ENCODE measurements at regions of chr3 and their contacts with region 1.

Region 1: DNA sequence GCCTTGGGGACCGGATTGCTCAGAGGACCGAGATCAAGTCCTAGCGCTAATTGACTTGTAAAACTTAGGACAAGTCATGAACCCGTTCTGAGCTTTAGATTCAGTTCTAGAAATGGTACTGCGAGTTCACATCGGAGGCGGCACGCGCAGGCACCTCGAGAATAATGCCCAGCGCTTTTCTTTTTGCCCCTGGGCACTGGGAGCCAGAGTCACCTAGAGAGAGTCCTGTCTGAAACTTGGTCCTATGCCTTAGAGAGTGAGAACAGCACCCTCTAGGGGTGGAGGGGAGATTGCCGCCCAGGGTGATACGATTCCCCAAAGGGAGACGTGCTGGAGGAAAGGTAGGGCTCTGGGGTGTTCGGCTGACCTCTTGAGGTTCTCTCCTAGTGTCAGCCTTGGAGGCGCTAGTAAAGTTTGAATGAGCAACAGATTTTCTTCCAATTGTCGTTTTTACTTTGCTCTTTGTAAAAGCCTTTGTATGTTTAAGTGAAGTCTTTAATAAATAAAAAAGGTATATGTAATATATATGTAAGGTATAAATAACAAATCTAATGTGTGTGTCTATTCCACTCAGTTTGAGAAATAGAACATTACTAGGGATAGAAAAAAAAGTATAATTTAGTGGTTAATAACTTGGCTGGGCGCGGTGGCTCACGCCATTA is 826 bp downstream of the EEF1AKMT4 start:
- DNase-seq: peak; percentile 77 to 92 (median 86)
- ATAC-seq: peak; percentile 62
- H3K4me3 ChIP-seq: peak overlapping the region; percentile 86
- H3K4me3 Mint-ChIP-seq: peak overlapping the region; percentile 93
- H3K27ac ChIP-seq: peak overlapping the region; percentile 61 to 79
- H3K27ac Mint-ChIP-seq: peak overlapping the region; percentile 94
- H3K4me1 ChIP-seq: peaks cover 28% of the 10 kb centered on the region
- H3K4me1 Mint-ChIP-seq: peaks cover 21% of the 10 kb centered on the region
- H3K27me3 ChIP-seq: no peaks in the 10 kb centered on the region
- H3K27me3 Mint-ChIP-seq: no peaks in the 10 kb centered on the region
- CTCF ChIP-seq: peak; percentile 88

Region 2: DNA sequence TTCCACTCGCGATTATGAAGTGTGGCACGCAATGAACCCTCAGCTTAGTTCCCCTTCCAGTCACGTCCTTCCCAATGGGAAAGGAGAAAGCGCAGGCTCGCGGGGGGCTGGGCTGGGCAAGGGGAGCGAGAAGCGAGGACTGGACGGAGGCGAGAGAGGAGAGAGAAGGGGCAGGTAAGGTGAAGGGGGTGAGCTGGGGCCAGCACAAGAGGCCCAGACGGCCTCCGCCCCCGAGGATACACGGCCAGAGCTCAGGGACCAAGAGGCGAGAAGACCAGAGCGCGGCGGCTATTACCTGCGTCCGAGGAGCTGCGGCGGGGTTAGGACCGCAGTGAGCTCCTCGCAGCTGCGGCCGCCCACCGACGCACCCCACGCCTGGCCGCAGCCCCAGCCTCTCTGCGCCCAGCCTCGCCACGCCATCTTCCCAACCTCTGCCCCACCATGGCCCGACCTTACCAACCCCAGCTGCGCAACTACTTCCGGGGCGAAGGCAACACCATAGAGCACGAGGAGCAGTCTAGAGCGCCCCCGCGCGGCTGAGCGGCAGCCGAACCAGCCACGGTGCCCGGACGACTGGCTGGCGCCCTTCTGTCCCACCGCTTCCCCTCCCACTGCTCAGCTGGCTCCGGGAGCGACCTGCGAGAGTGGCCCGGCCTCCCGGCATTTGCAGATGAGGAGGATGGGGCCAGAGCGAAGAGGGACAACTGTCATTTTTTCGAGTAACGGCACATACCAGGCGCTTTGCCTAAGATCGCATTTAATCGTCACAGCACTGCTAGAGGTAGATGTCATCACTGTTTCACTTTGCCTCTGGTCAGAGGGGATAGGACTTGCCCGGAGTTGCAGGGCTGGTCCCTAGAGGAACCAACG is 365.6 kb before region 1 on chr3 and contains the start of gene PARL:
- CTCF ChIA-PET with region 1: interaction called, 4 read pairs
- POLR2A ChIA-PET with region 1: no interaction called
- intact Hi-C with region 1: loop called in 1 of 2 experiments (anchors 2 kb)
- DNase-seq: peak; percentile 93 to 98 (median 96)
- ATAC-seq: peak; percentile 100
- H3K4me3 ChIP-seq: peak within 1 kb of the TSS; percentile 97
- H3K4me3 Mint-ChIP-seq: peak within 1 kb of the TSS; percentile 97
- H3K27ac ChIP-seq: peak within 1 kb of the TSS; percentile 66
- H3K27ac Mint-ChIP-seq: peak within 1 kb of the TSS; percentile 82
- H3K4me1 ChIP-seq: peaks cover 37% of the 10 kb centered on the region
- H3K4me1 Mint-ChIP-seq: peaks cover 36% of the 10 kb centered on the region
- H3K27me3 ChIP-seq: no peaks in the 10 kb centered on the region
- H3K27me3 Mint-ChIP-seq: no peaks in the 10 kb centered on the region
- CTCF ChIP-seq: peak; percentile 91
- total RNA-seq, gene PARL: 36.9 to 40.0 TPM

Region 3: GRCh38 chr3:184017672-184018423 is 232.4 kb before region 1 on chr3 and contains the start of gene ABCC5:
- CTCF ChIA-PET with region 1: interaction called, 3 read pairs
- POLR2A ChIA-PET with region 1: no interaction called
- intact Hi-C with region 1: loop called (anchors 1 to 5 kb)
- DNase-seq: peak; percentile 65 to 92 (median 78)
- ATAC-seq: peak; percentile 94
- H3K4me3 ChIP-seq: peak within 1 kb of the TSS; percentile 96
- H3K4me3 Mint-ChIP-seq: peak within 1 kb of the TSS; percentile 100
- H3K27ac ChIP-seq: peak within 1 kb of the TSS; percentile 23 to 43
- H3K27ac Mint-ChIP-seq: peak within 1 kb of the TSS; percentile 66
- H3K4me1 ChIP-seq: peaks cover 16% of the 10 kb centered on the region
- H3K4me1 Mint-ChIP-seq: peaks cover 26% of the 10 kb centered on the region
- H3K27me3 ChIP-seq: peaks cover 0 to 3% of the 10 kb centered on the region in 2 experiments
- H3K27me3 Mint-ChIP-seq: peaks cover 5% of the 10 kb centered on the region
- CTCF ChIP-seq: peak; percentile 89
- total RNA-seq, gene ABCC5: 10.8 to 11.4 TPM

Region 4: GRCh38 chr3:184145111-184145524 is 105.2 kb before region 1 on chr3:
- CTCF ChIA-PET with region 1: interaction called, 4 read pairs
- POLR2A ChIA-PET with region 1: no interaction called
- intact Hi-C with region 1: loop called in 1 of 2 experiments (anchors 1 kb)
- DNase-seq: peak in 9 of 14 experiments; percentile 16 to 67 (median 48)
- ATAC-seq: peak; percentile 80
- H3K4me3 ChIP-seq: no peak overlapping the region
- H3K4me3 Mint-ChIP-seq: no peak overlapping the region
- H3K27ac ChIP-seq: no peak overlapping the region
- H3K27ac Mint-ChIP-seq: no peak overlapping the region
- H3K4me1 ChIP-seq: no peaks in the 10 kb centered on the region
- H3K4me1 Mint-ChIP-seq: no peaks in the 10 kb centered on the region
- H3K27me3 ChIP-seq: no peaks in the 10 kb centered on the region
- H3K27me3 Mint-ChIP-seq: no peaks in the 10 kb centered on the region
- CTCF ChIP-seq: peak; percentile 31

Region 5: DNA sequence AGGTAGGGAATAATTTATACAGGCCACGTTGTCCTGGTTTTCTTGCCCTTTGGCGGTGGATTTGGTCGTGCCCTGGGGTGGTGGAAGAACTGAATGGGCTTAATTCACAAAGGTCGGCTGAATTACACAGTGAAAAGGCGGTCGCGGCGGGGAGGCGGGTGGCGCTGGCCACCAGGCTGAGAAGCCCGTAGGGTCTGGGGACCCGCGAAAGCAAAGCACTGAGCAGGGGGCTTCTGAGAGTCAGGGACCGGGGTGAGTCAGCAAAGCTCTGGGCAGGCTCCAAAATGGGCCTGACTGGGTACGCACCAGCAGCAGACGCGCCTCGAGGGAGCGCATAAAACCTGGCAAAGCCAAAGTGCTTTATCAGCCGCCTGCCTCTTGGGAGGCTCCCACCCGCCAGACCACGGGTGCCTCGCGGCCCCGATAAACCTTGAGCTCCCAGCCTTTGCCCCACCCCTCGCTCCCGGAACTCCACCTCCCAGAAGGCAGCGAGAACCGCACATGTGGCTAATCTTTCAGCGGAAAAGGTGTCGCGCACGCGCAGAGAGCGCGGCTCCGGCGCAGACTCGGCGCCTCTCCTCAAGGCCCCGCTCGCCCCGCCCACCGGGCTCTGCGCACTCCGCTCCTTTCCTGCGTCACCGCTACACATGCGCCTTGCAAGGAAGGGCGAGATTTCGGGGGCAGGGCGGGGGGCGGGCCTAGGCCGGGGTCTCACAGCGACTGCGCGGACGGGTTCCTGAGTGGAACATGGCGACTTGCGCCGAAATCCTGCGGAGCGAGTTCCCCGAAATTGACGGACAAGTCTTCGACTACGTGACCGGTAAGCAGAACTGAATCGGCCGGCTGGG is 64.6 kb before region 1 on chr3 and contains the start of gene ABCF3:
- CTCF ChIA-PET with region 1: interaction called, 7 read pairs
- POLR2A ChIA-PET with region 1: no interaction called
- intact Hi-C with region 1: loop called (anchors 2 to 5 kb)
- DNase-seq: peak; percentile 98 to 100 (median 99)
- ATAC-seq: peak; percentile 95
- H3K4me3 ChIP-seq: peak within 1 kb of the TSS; percentile 81
- H3K4me3 Mint-ChIP-seq: peak within 1 kb of the TSS; percentile 99
- H3K27ac ChIP-seq: peak within 1 kb of the TSS; percentile 15 to 69
- H3K27ac Mint-ChIP-seq: peak within 1 kb of the TSS; percentile 87
- H3K4me1 ChIP-seq: peaks cover 32% of the 10 kb centered on the region
- H3K4me1 Mint-ChIP-seq: peaks cover 47% of the 10 kb centered on the region
- H3K27me3 ChIP-seq: no peaks in the 10 kb centered on the region
- H3K27me3 Mint-ChIP-seq: no peaks in the 10 kb centered on the region
- CTCF ChIP-seq: no peak
- total RNA-seq, gene ABCF3: 163 to 166 TPM

Region 6: DNA sequence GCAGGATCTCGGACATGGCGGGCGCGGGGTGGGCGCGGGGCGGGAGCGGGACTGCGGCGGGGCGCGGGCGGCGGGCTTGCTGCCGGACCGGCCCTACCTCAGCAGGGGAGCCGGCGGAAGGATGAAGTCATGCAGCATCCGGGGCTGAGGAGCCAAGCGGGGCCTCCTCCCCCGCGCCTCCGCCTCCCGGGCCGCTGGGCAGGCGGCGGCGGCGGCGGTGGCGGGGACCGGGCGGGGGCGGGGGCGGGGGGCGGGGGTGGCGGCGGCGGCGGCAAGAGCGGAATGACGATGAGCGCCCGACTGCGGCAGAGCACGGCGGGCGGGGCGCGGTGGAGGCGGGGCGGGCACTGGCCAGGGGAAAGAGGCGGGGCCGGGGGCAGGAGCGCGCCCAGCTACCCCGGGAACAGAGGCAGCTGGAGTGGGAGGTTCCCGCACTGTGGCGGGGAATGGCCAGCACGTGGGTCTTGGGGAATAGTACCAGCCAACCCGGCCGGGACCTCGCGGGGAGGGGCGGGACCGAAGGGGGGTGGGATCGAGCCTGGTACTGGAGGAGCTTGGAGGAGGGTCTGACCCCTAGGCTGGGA is 11.1 kb after region 1 on chr3 and contains the start of gene CAMK2N2:
- CTCF ChIA-PET with region 1: interaction called, 12 read pairs
- POLR2A ChIA-PET with region 1: interaction called, 4 read pairs
- intact Hi-C with region 1: no loop called
- DNase-seq: peak in 10 of 14 experiments; percentile 15 to 79 (median 55)
- ATAC-seq: peak; percentile 48
- H3K4me3 ChIP-seq: peak within 1 kb of the TSS; percentile 60
- H3K4me3 Mint-ChIP-seq: peak within 1 kb of the TSS; percentile 84
- H3K27ac ChIP-seq: no peak within 1 kb of the TSS
- H3K27ac Mint-ChIP-seq: no peak within 1 kb of the TSS
- H3K4me1 ChIP-seq: peaks cover 29% of the 10 kb centered on the region
- H3K4me1 Mint-ChIP-seq: peaks cover 17% of the 10 kb centered on the region
- H3K27me3 ChIP-seq: peaks cover 37% of the 10 kb centered on the region in 2 experiments
- H3K27me3 Mint-ChIP-seq: peaks cover 53% of the 10 kb centered on the region
- CTCF ChIP-seq: no peak
- total RNA-seq, gene CAMK2N2: not detected